Ascending aorta (tissue), 2 donors: ENCODE measurements at regions of chr15 and their contacts with region 1.

Region 1: DNA sequence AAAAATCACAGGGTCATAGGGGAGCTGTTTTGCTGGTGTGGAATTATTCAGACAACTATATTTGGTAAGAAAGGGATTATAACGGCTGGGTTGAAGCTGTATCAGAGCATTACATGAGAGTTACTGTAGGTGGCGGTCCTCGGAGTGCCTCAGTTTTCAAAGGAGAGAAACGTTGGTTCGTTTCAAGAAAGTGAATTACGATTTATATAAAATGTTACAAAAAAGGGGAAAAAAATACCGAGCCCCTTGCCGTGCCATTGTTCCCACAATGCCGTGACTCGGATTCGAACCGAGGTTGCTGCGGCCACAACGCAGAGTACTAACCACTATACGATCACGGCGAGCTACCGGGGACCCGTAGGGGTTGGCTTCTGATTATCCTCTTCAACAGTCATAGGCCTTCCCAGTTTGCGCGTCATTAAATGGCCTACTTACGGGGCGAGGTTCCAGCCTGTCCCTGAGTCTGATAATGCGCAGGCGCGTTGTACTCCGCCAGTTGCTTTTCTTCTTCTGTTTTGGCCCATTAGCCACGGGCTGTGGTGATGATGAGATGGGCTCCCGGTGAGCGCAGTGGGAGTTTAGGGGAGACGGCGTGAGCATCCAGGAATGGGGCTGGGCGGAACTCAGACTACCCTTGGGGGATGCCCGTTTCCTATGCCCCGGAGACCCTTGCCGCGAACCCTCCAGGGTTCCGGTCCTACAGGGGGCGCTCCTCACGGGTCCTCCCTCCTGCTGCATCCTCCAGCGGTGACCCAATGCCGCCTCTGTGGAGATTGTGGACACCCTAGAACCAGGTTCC is 10.8 kb upstream of the SHF start:
- DNase-seq: peak; percentile 90 to 99
- H3K4me3 ChIP-seq: peak overlapping the region; percentile 68 to 87
- H3K27ac ChIP-seq: peak overlapping the region; percentile 96 to 98
- H3K4me1 ChIP-seq: peaks cover 0 to 5% of the 10 kb centered on the region in 2 donors
- H3K27me3 ChIP-seq: no peaks in the 10 kb centered on the region
- CTCF ChIP-seq: peak; percentile 55 to 68 (median 66)

Region 2: GRCh38 chr15:44536962-44537734 is 661.4 kb before region 1 on chr15 and contains the start of gene EIF3J:
- intact Hi-C with region 1: loop called (anchors 5 kb)
- DNase-seq: peak; percentile 84 to 97
- H3K4me3 ChIP-seq: peak within 1 kb of the TSS; percentile 75 to 88
- H3K27ac ChIP-seq: peak within 1 kb of the TSS; percentile 96 to 98
- H3K4me1 ChIP-seq: peaks cover 8 to 33% of the 10 kb centered on the region in 2 donors
- H3K27me3 ChIP-seq: no peaks in the 10 kb centered on the region
- CTCF ChIP-seq: no peak
- total RNA-seq, gene EIF3J: 22.8 TPM

Region 3: DNA sequence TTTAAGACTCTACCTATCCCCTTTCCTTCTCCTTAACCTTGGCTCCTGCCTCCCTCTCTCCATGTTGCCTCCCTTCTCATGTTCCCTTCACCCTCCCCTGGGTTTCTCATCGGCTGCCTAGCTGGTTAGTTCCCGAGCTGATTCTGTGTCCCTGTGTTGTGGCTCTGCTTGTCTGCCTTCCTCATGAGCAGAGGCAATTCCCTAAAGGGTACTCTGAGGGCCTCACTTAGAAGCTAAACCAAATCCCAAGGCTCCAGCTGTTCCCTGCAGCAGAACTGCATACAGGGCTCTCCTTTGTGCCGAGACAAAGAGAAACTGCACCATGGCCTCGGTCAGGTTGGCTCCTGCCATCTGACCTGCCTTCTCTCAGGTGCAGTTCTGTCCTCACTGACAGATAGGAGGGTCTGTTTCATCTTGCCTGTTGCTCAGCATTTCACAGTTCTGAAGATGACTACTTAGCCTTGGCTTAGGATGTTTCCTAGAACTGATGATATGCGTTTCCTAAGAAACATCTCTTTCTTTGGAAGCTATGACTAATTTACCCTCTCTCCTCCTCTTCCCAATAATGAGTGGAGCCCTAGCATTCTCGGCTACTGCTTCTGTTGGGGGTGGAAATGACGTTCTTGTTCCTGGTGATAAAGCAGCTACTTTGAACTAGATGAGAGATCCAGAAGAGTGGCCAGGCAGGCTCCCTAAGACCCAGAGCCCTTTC is 41.6 kb before region 1 on chr15:
- intact Hi-C with region 1: no loop called
- DNase-seq: no peak
- H3K4me3 ChIP-seq: no peak overlapping the region
- H3K27ac ChIP-seq: no peak overlapping the region
- H3K4me1 ChIP-seq: no peaks in the 10 kb centered on the region
- H3K27me3 ChIP-seq: no peaks in the 10 kb centered on the region
- CTCF ChIP-seq: no peak

Region 4: DNA sequence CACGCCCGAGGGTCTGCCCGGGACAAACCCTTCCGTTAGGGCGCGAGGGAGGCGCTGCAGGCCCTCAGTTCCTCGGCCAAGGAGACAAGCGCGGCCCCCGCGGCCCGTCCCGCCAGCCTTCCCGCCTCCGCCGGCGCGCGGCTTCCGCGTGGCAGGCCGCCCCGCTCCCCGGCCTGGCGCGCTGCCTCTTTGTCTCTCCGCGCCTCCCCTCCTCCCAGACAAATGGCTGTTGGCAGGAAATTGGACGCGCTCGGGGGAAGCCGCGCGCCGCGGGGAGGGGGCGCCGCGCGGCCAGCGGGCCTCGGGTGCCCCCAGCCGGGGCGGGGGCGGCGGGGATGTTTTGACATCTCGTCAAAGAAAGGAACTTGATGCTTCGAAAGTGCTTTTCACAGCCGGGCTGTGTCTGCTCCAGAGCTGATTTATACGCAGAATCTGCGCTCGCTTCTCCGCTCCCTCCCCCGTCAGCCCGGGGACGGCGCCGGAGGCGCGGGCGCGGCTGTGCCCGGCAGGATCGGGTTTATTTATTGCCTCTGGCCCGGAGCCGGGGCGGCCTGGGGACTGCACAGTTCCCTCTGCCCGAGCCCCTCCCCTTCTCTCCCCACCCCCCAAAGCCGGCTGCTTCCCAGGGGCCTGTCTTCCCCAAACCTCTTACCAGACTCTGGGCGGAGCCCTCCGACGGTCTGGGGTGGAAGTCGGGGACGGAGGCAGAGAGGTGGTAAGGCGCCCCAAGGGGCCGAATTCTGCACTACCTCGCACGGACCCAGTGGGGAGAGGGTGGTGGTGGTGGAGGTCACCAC is 31.5 kb before region 1 on chr15:
- intact Hi-C with region 1: loop called (anchors 1 kb)
- DNase-seq: peak; percentile 49 to 93
- H3K4me3 ChIP-seq: peak overlapping the region; percentile 78 to 97
- H3K27ac ChIP-seq: peak overlapping the region; percentile 97 to 99
- H3K4me1 ChIP-seq: peaks cover 0 to 14% of the 10 kb centered on the region in 2 donors
- H3K27me3 ChIP-seq: no peaks in the 10 kb centered on the region
- CTCF ChIP-seq: peak; percentile 40 to 74 (median 62)

Region 5: DNA sequence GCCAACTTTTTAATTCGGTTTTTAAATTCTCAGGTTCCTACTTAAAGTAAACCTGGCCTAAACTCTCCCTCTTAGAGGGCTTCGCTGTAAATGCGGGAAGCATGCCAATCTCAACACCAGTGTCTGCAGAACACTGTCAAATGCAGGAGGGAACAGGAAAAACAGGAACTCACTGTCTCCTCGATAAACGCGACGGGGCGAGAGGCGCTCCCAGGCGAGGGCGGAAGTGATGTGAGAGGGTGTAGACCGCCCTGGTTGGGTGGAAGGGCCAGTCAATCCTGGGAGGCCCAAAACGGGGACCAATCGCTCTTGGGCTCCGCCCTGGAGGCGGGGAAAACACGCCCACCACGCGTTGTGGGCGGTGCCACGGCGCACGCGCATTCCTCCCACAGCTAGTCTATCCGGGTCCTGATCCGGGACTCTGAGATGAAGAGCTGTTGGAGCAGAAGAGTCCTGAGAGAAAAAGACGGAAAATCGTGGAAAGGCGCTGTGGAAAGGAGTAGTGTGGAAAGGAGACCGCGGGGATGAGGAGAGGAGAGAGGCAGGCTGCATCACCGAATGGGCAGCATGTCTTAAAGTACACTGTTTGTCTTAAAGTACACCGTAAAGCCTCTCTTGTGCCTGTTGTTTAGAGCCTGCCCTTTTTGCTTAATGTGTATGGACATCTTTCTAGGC is 80.6 kb after region 1 on chr15:
- intact Hi-C with region 1: loop called (anchors 1 kb)
- DNase-seq: peak; percentile 91 to 99
- H3K4me3 ChIP-seq: peak overlapping the region; percentile 64 to 71
- H3K27ac ChIP-seq: peak overlapping the region; percentile 82 to 86
- H3K4me1 ChIP-seq: peaks cover 0 to 11% of the 10 kb centered on the region in 2 donors
- H3K27me3 ChIP-seq: no peaks in the 10 kb centered on the region
- CTCF ChIP-seq: no peak

Region 6: GRCh38 chr15:45402162-45402954 is 203.8 kb after region 1 on chr15:
- intact Hi-C with region 1: loop called (anchors 2 kb)
- DNase-seq: peak; percentile 80 to 97
- H3K4me3 ChIP-seq: peak overlapping the region; percentile 92 to 94
- H3K27ac ChIP-seq: peak overlapping the region; percentile 85 to 92
- H3K4me1 ChIP-seq: peaks cover 3 to 18% of the 10 kb centered on the region in 2 donors
- H3K27me3 ChIP-seq: no peaks in the 10 kb centered on the region
- CTCF ChIP-seq: peak in 1 of 3 experiments; percentile 14